Heart left ventricle (tissue), 16 donors: ENCODE measurements at regions of chr16 and their contacts with region 1.

Region 1: GRCh38 chr16:57984331-57985203 is 13.6 kb upstream of the CNGB1 start:
- DNase-seq: peak; percentile 79 to 95 (median 87)
- ATAC-seq: peak; percentile 59 to 91 (median 89)
- H3K4me3 ChIP-seq: peak overlapping the region; percentile 34 to 67 (median 58)
- H3K27ac ChIP-seq: peak overlapping the region in 1 of 12 donors; percentile 47
- H3K4me1 ChIP-seq: peaks cover 0 to 22% (median 10%) of the 10 kb centered on the region in 12 donors
- H3K27me3 ChIP-seq: peaks cover 0 to 12% (median 0%) of the 10 kb centered on the region in 9 donors
- CTCF ChIP-seq: no peak
- POLR2A ChIP-seq: no peak

Region 2: DNA sequence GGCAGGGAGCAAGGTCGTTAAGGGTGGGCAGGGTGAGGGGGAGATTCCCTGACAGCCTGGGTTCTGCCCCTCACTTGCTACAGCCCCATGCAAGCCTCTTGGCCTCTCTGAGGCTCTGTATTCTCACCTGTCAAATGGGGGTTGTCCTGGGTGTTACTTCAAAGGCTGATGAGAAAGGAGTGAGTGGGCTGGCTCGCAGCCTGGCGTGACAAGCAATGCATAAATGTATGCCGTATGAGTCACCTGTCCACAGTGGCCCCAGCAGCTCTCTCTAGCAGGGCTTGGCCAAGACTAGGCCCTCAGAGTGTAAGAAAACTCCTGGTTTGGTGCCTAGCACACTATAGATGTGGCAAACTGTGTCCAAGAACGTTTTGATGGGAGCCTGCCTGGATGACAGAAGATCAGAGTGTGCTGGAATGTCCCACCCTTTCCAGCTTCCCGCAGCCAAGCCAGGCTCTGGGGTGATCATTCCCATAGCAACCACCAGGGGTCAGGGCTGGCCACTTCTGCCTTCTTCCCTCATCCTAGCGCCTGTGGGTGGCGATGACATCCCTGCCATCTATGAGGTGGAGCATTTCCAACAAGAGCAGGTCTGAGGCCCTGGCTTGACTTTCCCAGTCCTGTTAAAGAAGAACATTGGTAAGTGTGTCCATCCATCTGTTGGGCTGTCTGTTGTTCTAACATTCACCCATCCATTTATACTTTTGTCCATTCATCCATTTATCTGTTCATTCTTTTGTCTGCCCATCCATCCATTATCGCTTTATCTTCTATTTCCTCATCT is 393.3 kb before region 1 on chr16:
- intact Hi-C with region 1: loop called in 1 of 10 experiments (anchors 10 kb)
- DNase-seq: peak; percentile 70 to 81 (median 71)
- ATAC-seq: peak; percentile 90 to 97 (median 94)
- H3K4me3 ChIP-seq: no peak overlapping the region
- H3K27ac ChIP-seq: peak overlapping the region in 1 of 12 donors; percentile 3
- H3K4me1 ChIP-seq: peaks cover 0 to 25% (median 6%) of the 10 kb centered on the region in 12 donors
- H3K27me3 ChIP-seq: peaks cover 0 to 7% (median 0%) of the 10 kb centered on the region in 9 donors
- CTCF ChIP-seq: peak; percentile 83 to 95 (median 88)
- POLR2A ChIP-seq: no peak

Region 3: GRCh38 chr16:58187092-58187491 is 202.5 kb after region 1 on chr16:
- intact Hi-C with region 1: no loop called
- DNase-seq: no peak
- ATAC-seq: peak in 1 of 4 donors; percentile 22
- H3K4me3 ChIP-seq: no peak overlapping the region
- H3K27ac ChIP-seq: peak overlapping the region in 3 of 12 donors; percentile 5 to 18 (median 8)
- H3K4me1 ChIP-seq: peaks cover 5 to 24% (median 17%) of the 10 kb centered on the region in 12 donors
- H3K27me3 ChIP-seq: no peaks in the 10 kb centered on the region
- CTCF ChIP-seq: no peak
- POLR2A ChIP-seq: no peak